CD8-positive, alpha-beta T cell (primary cell): ENCODE measurements at regions of chr15 and their contacts with region 1.

Region 1: GRCh38 chr15:78761891-78762385 is 49.3 kb downstream of the ADAMTS7 start:
- DNase-seq: no peak
- ATAC-seq: no peak
- H3K4me3 ChIP-seq: peak overlapping the region in 1 of 2 experiments; percentile 45
- H3K4me3 Mint-ChIP-seq: peak overlapping the region; percentile 55
- H3K27ac ChIP-seq: peak overlapping the region; percentile 39 to 71
- H3K27ac Mint-ChIP-seq: peak overlapping the region; percentile 85
- H3K4me1 ChIP-seq: peaks cover 20% of the 10 kb centered on the region
- H3K4me1 Mint-ChIP-seq: peaks cover 26% of the 10 kb centered on the region
- H3K27me3 ChIP-seq: no peaks in the 10 kb centered on the region
- H3K27me3 Mint-ChIP-seq: no peaks in the 10 kb centered on the region
- CTCF ChIP-seq: no peak

Region 2: DNA sequence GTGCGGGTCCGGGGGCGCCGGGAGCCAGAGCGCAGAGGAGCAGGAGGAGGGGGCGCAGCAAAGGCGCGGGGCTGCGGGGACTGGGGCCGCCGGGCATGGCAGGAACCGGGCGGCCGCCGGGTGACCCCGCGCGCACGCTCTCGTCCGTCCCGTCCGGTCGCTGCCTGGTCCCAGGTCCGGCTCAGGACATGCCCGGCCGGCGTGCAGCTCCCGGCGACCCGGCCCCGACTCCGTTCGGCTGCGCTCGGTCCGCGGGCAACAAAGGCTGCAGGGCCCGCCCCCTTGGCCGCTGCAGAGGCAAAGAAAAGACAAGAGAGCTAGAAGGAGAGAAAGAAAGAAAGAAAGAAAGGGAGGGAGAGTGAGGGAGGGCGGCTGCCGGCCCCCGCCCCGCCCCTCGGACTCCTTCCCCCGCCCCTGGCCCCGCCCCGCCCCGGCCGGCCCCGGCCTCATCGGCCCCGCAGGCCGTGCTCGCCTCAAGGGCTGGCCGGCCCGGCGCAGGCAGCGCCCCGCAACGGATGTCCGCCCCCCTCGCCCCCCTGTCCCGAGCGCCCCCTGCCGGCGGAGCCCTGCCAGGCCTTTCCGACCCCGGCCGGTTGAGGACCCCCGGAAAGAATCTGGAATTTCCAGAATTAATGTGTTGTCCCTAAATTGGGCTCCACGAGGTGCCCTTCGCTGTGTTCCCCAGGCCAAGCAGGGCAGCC is 49.3 kb after region 1 on chr15 and contains the start of gene ADAMTS7:
- CTCF ChIA-PET with region 1: interaction called, 4 read pairs
- POLR2A ChIA-PET with region 1: interaction called, 6 read pairs
- intact Hi-C with region 1: loop called (anchors 2 to 10 kb)
- DNase-seq: peak; percentile 12 to 73 (median 59)
- ATAC-seq: peak; percentile 73
- H3K4me3 ChIP-seq: peak within 1 kb of the TSS; percentile 43 to 48
- H3K4me3 Mint-ChIP-seq: peak within 1 kb of the TSS; percentile 82
- H3K27ac ChIP-seq: no peak within 1 kb of the TSS
- H3K27ac Mint-ChIP-seq: no peak within 1 kb of the TSS
- H3K4me1 ChIP-seq: peaks cover 14% of the 10 kb centered on the region
- H3K4me1 Mint-ChIP-seq: peaks cover 14% of the 10 kb centered on the region
- H3K27me3 ChIP-seq: peaks cover 8 to 16% of the 10 kb centered on the region in 2 experiments
- H3K27me3 Mint-ChIP-seq: peaks cover 44% of the 10 kb centered on the region
- CTCF ChIP-seq: peak; percentile 62
- total RNA-seq, gene ADAMTS7: not detected

Region 3: DNA sequence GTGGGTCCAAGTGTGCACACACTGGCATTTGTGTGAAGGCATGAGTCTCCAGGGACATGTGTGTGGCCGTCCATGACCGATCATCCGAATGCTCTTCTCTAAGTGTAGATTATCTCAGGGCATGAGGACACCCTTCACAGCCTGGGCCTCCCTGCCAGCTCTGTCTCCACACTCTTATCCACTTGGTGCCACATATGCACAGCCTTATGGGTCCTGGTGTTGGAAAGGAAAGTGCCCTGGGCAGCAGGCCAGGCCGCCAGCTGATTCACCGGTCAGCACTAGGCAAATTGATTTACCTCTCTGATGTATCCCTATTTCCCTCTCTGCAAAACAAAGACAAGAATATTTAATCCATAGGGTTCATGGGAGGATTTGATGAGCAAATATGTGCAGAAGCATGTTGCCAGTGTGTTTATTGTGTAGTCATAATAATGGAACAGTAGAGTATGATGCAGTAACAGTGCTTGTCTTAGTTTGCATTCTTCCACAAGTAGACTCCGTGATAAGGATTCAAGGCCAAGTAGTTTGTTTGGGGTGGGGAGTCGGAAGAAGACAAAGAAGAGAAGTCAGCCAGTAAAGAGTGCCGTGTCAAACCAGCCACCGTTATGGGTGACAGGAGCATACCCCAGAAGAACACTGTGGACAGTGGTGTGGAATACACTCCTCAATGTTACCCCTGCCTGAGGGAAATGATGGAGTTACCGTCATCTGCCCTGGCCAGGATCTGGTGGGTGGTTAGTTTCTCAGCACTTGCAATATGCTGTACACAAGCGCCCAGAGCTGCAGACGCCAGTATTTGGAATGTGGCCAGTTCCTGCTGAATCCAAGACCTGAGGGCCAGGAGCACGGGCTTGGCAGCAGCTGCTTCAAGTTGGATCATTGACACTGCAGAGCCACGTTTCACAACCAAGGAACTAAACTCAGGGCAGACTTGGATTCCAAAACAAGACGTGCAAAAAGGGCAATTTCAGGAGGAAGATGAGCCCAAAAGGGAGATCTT is 1049.8 kb after region 1 on chr15:
- CTCF ChIA-PET with region 1: no interaction called
- POLR2A ChIA-PET with region 1: no interaction called
- intact Hi-C with region 1: no loop called
- DNase-seq: no peak
- ATAC-seq: no peak
- H3K4me3 ChIP-seq: no peak overlapping the region
- H3K4me3 Mint-ChIP-seq: no peak overlapping the region
- H3K27ac ChIP-seq: no peak overlapping the region
- H3K27ac Mint-ChIP-seq: no peak overlapping the region
- H3K4me1 ChIP-seq: no peaks in the 10 kb centered on the region
- H3K4me1 Mint-ChIP-seq: no peaks in the 10 kb centered on the region
- H3K27me3 ChIP-seq: no peaks in the 10 kb centered on the region
- H3K27me3 Mint-ChIP-seq: no peaks in the 10 kb centered on the region
- CTCF ChIP-seq: no peak